ENCODE measurements at regions of chr5 and their contacts with region 1.

Region 1: DNA sequence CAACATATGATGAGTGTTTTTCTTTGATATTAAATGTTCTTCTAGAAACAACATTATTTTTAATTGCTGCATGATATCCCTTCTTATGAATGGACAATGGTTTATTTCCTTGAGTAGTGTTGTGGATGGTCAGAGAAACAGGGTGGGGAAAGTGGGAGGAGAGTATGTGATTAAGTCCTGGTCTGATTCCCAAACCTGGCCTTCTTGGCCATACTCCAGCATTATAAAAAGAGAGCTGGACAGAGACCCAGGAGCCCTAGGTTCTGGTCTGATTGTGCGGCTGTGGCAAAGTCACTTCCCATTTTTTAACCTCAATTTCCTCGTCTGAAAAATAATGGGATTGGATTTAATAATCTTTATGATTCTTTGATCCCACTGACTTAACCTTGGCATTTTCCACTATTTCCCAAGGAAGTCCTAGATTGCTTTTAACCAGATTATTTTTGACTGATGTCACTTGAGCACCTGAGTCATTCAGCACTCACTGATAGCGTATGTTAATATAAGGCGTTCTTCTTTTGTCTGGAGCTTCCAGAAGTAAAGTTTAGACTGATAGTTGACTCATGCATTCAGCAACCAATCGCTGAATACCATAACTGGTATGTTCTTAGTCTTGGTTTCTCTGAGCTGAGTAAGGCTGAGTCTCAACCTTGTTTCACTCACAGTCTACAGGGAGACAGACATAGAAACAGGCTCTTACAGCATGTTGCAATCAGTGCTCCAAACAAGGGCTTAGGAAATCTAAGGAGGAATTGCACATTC is 26.2 kb downstream of the OSMR start:
- DNase-seq: peak; percentile 99
- H3K4me3 ChIP-seq: no peak overlapping the region
- H3K27ac ChIP-seq: peak overlapping the region; percentile 99
- H3K4me1 ChIP-seq: peaks cover 43% of the 10 kb centered on the region
- H3K27me3 ChIP-seq: no peaks in the 10 kb centered on the region
- CTCF ChIP-seq: no peak

Region 2: DNA sequence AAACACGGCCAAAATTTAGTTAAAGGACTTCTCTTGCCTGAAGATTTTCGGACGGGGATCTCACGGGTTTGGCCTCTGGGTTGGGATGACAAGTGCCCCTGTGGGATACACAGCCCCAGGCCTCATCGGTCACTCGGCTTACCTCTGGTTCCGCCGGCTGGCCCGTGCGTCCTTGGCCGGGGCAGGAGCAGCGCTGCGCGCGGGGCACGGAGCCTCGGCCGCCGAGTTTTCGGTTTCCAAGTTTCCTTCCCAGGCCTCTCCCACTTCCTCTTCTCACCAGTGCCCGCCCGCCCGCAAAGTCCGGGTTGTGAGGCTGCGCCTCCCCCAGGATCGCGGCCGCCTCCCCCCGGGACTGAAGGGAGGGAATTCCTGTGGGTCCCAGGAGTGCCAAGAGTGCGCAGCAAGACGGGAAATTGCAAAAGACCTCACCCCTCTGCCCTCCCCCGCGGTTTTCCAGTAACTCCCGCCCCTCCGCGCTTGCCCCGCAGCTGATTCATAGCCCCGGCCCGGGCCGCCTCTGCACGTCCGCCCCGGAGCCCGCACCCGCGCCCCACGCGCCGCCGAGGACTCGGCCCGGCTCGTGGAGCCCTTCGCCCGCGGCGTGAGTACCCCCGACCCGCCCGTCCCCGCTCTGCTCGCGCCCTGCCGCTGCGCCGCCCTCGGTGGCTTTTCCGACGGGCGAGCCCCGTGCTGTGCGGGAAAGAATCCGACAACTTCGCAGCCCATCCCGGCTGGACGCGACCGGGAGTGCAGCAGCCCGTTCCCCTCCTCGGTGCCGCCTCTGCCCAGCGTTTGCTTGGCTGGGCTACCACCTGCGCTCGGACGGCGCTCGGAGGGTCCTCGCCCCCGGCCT is 26.2 kb before region 1 on chr5 and contains the start of gene OSMR:
- CTCF ChIA-PET with region 1: no interaction called
- dilution Hi-C with region 1: no loop called
- in situ Hi-C with region 1: no loop called
- intact Hi-C with region 1: loop called (anchors 1 kb)
- DNase-seq: peak; percentile 98
- H3K4me3 ChIP-seq: peak within 1 kb of the TSS; percentile 96 to 98 (median 97)
- H3K27ac ChIP-seq: peak within 1 kb of the TSS; percentile 100
- H3K4me1 ChIP-seq: peaks cover 17% of the 10 kb centered on the region
- H3K27me3 ChIP-seq: no peaks in the 10 kb centered on the region
- CTCF ChIP-seq: no peak
- total RNA-seq, gene OSMR: 97.7 to 111 TPM

Region 3: DNA sequence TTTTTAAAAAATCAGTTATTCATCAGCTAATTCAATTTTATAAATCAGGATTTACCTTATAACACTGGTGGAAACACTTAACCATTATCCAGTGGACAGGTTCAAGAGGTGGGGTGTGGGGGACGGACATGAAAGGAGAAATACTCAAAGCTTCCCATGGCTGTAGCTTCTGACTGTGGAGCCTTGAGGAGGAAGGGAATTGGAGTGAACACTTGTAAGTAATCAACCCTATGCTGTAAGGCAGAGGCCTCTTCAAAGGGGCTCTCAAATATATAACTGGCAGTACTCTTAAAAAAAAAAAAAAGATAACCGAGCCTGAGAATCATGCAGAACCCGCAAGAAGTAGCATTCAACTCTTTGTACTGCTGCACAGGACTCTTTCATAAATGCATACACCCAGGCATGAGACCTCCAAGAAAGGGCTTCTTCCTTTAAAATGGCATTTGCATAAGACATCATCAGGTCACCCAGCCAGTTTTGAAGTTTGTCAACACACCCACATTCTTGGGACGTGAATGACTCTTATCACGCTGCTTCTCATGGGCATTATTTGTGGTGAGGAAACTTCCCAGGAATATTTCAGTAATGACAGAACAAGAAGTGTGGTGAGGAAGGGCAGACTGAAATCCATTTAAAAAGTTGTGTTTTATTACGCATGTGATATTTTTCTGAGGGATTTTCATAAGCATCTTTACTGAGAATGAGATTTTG is 18.1 kb before region 1 on chr5:
- CTCF ChIA-PET with region 1: no interaction called
- dilution Hi-C with region 1: no loop called
- in situ Hi-C with region 1: no loop called
- intact Hi-C with region 1: loop called (anchors 2 kb)
- DNase-seq: peak; percentile 94
- H3K4me3 ChIP-seq: no peak overlapping the region
- H3K27ac ChIP-seq: peak overlapping the region; percentile 87
- H3K4me1 ChIP-seq: peaks cover 26% of the 10 kb centered on the region
- H3K27me3 ChIP-seq: no peaks in the 10 kb centered on the region
- CTCF ChIP-seq: no peak

Region 4: DNA sequence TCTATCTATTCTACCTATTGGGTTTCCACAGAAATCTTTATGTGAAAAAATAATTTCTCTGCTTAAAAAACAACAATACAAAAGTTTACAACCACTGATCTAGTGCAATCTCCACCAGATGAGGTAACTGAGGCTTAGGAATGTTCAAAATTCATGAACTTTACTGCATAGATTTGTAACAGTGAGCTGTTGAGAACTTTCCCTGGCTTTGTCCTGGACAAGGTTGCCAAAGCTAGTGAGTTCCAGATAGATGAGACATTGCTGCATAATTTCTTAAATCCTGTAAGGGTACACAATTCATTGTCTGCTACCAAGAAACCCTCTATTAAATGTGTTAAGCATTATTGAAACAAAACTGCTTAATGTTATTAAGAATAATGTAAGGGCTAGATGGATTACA is 76.5 kb after region 1 on chr5:
- CTCF ChIA-PET with region 1: no interaction called
- dilution Hi-C with region 1: no loop called
- in situ Hi-C with region 1: no loop called
- intact Hi-C with region 1: no loop called
- DNase-seq: no peak
- H3K4me3 ChIP-seq: no peak overlapping the region
- H3K27ac ChIP-seq: no peak overlapping the region
- H3K4me1 ChIP-seq: no peaks in the 10 kb centered on the region
- H3K27me3 ChIP-seq: no peaks in the 10 kb centered on the region
- CTCF ChIP-seq: no peak